Activated CD4-positive, alpha-beta memory T cell treated with anti-CD3 and anti-CD28 coated beads, Interleukin-2, amount 10 ng/mL, durations not matched to agents 7 days and 5 days (primary cell): ENCODE measurements at regions of chr2 and their contacts with region 1.

Region 1: GRCh38 chr2:71299507-71299906 is 32.1 kb upstream of the ZNF638 start:
- DNase-seq: no peak
- H3K4me3 Mint-ChIP-seq: no peak overlapping the region
- H3K27ac Mint-ChIP-seq: no peak overlapping the region
- H3K4me1 Mint-ChIP-seq: no peaks in the 10 kb centered on the region
- H3K27me3 Mint-ChIP-seq: peaks cover 3% of the 10 kb centered on the region

Region 2: DNA sequence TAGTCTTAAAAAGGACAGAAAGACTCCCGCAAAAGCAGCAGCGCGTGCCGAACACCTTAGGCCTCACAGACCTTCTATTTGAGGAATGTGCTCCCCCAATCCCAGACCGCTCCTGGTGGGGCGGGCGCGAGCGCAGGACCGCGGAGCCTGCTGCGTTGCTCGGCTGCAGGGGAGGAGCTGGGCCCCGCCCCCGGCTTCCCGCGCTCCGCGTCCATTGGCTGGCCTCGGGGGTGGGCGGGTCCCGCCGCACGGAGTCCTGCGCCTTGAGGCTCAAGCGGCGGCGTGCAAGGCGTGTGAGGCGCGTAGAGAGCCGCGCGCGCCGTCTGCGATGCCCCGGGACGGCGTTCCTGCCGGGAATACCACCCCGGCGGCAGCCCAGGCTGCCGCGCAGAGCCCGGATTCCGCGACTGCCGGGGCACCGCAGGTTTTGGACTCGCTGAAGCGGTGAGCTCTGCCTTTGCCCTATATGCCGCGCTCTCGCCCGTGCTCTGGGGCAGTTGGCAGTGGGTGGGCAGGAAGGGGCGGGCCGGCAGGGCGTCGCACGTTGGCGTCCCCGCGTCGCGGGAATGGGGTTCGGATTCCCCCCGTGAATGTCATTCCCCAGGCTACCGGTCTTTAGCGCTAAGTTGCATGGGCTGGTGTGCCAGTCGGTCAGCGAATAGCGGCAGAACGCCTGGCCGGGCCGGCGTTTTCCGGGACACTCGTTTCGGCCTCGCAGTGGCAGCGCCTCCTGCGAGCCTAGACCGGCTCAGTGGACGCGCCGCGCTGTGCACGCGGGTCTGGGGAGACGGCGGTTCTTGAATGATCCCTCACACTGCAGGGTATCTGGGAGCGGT is 23.0 kb before region 1 on chr2:
- CTCF ChIA-PET with region 1: interaction called, 11 read pairs
- POLR2A ChIA-PET with region 1: no interaction called
- DNase-seq: peak; percentile 87
- H3K4me3 Mint-ChIP-seq: peak overlapping the region; percentile 55
- H3K27ac Mint-ChIP-seq: no peak overlapping the region
- H3K4me1 Mint-ChIP-seq: peaks cover 14% of the 10 kb centered on the region
- H3K27me3 Mint-ChIP-seq: peaks cover 86% of the 10 kb centered on the region

Region 3: GRCh38 chr2:71331581-71332434 is 32.3 kb after region 1 on chr2 and contains the start of gene ZNF638:
- CTCF ChIA-PET with region 1: interaction called, 17 read pairs
- POLR2A ChIA-PET with region 1: interaction called, 4 read pairs
- DNase-seq: peak; percentile 92
- H3K4me3 Mint-ChIP-seq: peak within 1 kb of the TSS; percentile 100
- H3K27ac Mint-ChIP-seq: peak within 1 kb of the TSS; percentile 99
- H3K4me1 Mint-ChIP-seq: peaks cover 28% of the 10 kb centered on the region
- H3K27me3 Mint-ChIP-seq: peaks cover 3% of the 10 kb centered on the region
- total RNA-seq, gene ZNF638: 78.6 to 79.3 TPM

Region 4: GRCh38 chr2:71460595-71461303 is 161.2 kb after region 1 on chr2:
- CTCF ChIA-PET with region 1: interaction called, 10 read pairs
- POLR2A ChIA-PET with region 1: no interaction called
- DNase-seq: no peak
- H3K4me3 Mint-ChIP-seq: no peak overlapping the region
- H3K27ac Mint-ChIP-seq: no peak overlapping the region
- H3K4me1 Mint-ChIP-seq: no peaks in the 10 kb centered on the region
- H3K27me3 Mint-ChIP-seq: peaks cover 10% of the 10 kb centered on the region

Region 5: GRCh38 chr2:71510196-71510807 is 210.8 kb after region 1 on chr2:
- CTCF ChIA-PET with region 1: interaction called, 140 read pairs
- POLR2A ChIA-PET with region 1: no interaction called
- DNase-seq: peak; percentile 72
- H3K4me3 Mint-ChIP-seq: no peak overlapping the region
- H3K27ac Mint-ChIP-seq: no peak overlapping the region
- H3K4me1 Mint-ChIP-seq: no peaks in the 10 kb centered on the region
- H3K27me3 Mint-ChIP-seq: peaks cover 4% of the 10 kb centered on the region